Activated CD4-positive, alpha-beta T cell treated with anti-CD3 and anti-CD28 coated beads for 36 hours (primary cell): ENCODE measurements at regions of chr7 and their contacts with region 1.

Region 1: DNA sequence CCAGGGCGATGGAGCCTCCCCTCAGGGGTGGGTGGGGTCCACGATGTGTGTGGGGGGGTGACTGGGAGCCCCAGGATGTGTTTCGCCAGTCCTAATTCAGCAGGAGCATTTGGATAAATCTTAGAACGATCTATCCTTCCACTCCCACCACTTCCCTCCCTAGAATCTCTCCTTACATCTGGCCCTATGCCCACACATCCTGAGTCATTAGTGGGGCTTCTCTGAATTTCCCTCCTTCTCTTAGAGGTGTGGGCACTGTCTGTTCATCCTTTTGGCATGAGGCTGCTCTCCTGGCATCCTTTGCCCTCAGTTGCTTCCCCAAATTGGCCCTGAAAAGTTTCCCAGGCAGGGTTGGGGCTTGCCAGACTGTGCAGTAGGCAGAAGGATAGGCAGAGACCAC is 1.6 kb downstream of the GHRHR start:
- DNase-seq: no peak
- ATAC-seq: no peak
- H3K4me3 Mint-ChIP-seq: no peak overlapping the region
- H3K27ac Mint-ChIP-seq: no peak overlapping the region
- H3K4me1 Mint-ChIP-seq: no peaks in the 10 kb centered on the region
- H3K27me3 Mint-ChIP-seq: peaks cover 7% of the 10 kb centered on the region

Region 2: GRCh38 chr7:30938435-30939316 is 26.7 kb before region 1 on chr7:
- CTCF ChIA-PET with region 1: interaction called, 14 read pairs
- POLR2A ChIA-PET with region 1: no interaction called
- intact Hi-C with region 1: no loop called
- DNase-seq: peak; percentile 83
- ATAC-seq: peak; percentile 84
- H3K4me3 Mint-ChIP-seq: no peak overlapping the region
- H3K27ac Mint-ChIP-seq: no peak overlapping the region
- H3K4me1 Mint-ChIP-seq: no peaks in the 10 kb centered on the region
- H3K27me3 Mint-ChIP-seq: peaks cover 17% of the 10 kb centered on the region

Region 3: GRCh38 chr7:31100445-31100844 is 135.1 kb after region 1 on chr7:
- CTCF ChIA-PET with region 1: no interaction called
- POLR2A ChIA-PET with region 1: no interaction called
- intact Hi-C with region 1: no loop called
- DNase-seq: no peak
- ATAC-seq: no peak
- H3K4me3 Mint-ChIP-seq: no peak overlapping the region
- H3K27ac Mint-ChIP-seq: no peak overlapping the region
- H3K4me1 Mint-ChIP-seq: no peaks in the 10 kb centered on the region
- H3K27me3 Mint-ChIP-seq: peaks cover 2% of the 10 kb centered on the region

Region 4: GRCh38 chr7:31151849-31152248 is 186.5 kb after region 1 on chr7:
- CTCF ChIA-PET with region 1: no interaction called
- POLR2A ChIA-PET with region 1: no interaction called
- intact Hi-C with region 1: no loop called
- DNase-seq: no peak
- ATAC-seq: no peak
- H3K4me3 Mint-ChIP-seq: no peak overlapping the region
- H3K27ac Mint-ChIP-seq: no peak overlapping the region
- H3K4me1 Mint-ChIP-seq: no peaks in the 10 kb centered on the region
- H3K27me3 Mint-ChIP-seq: no peaks in the 10 kb centered on the region